Calu3 (cell line): ENCODE measurements at regions of chr14 and their contacts with region 1.

Region 1: GRCh38 chr14:66403183-66403582 is 83.0 kb upstream of the CCDC196 start:
- DNase-seq: no peak
- H3K4me3 Mint-ChIP-seq: no peak overlapping the region
- H3K27ac Mint-ChIP-seq: no peak overlapping the region
- H3K4me1 Mint-ChIP-seq: peaks cover 9% of the 10 kb centered on the region
- H3K27me3 Mint-ChIP-seq: no peaks in the 10 kb centered on the region
- CTCF ChIP-seq: peak; percentile 45

Region 2: GRCh38 chr14:66117585-66117984 is 285.6 kb before region 1 on chr14:
- CTCF ChIA-PET with region 1: no interaction called
- intact Hi-C with region 1: no loop called
- DNase-seq: peak; percentile 12
- H3K4me3 Mint-ChIP-seq: no peak overlapping the region
- H3K27ac Mint-ChIP-seq: peak overlapping the region; percentile 5
- H3K4me1 Mint-ChIP-seq: peaks cover 14% of the 10 kb centered on the region
- H3K27me3 Mint-ChIP-seq: peaks cover 4% of the 10 kb centered on the region
- CTCF ChIP-seq: no peak

Region 3: DNA sequence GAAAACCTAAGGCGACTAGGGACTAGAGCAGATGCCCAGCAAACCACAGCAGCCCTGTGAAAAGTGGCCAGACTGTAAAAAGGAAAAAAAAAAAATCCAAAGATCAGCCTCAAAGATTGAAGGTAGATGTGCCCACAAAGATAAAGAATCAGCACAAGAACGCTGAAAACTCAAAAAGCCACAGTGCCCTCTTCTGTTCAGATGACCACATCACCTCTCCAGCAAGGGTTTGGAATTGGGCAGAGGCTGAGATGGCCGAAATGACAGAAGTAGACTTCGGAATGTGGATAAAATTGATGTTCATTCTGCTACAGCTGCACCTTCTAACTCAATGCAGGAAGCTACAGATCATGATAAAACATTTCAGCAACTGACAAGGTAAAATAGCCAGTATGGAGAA is 259.2 kb after region 1 on chr14:
- CTCF ChIA-PET with region 1: no interaction called
- intact Hi-C with region 1: loop called (anchors 5 kb)
- DNase-seq: peak; percentile 39
- H3K4me3 Mint-ChIP-seq: no peak overlapping the region
- H3K27ac Mint-ChIP-seq: peak overlapping the region; percentile 1
- H3K4me1 Mint-ChIP-seq: peaks cover 8% of the 10 kb centered on the region
- H3K27me3 Mint-ChIP-seq: no peaks in the 10 kb centered on the region
- CTCF ChIP-seq: peak; percentile 45

Region 4: DNA sequence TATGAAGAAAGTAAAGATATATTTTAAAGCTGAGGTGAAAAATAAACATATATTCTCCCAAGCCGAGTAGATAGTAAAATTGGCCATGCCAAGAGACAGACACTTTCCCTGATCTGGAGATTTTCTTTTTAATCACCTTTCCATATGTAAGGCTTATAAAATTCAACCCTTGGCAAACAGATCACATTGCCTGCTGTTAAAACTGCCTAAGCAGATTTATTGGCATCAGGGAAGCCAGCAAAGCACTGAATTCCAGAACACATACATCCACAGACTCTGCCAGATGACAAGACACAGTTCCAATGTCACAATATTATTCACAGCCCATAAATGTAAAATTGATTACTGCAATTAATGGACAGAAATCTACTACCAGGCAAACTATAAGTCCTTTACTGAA is 707.8 kb after region 1 on chr14:
- CTCF ChIA-PET with region 1: no interaction called
- intact Hi-C with region 1: loop called (anchors 5 kb)
- DNase-seq: no peak
- H3K4me3 Mint-ChIP-seq: no peak overlapping the region
- H3K27ac Mint-ChIP-seq: no peak overlapping the region
- H3K4me1 Mint-ChIP-seq: no peaks in the 10 kb centered on the region
- H3K27me3 Mint-ChIP-seq: no peaks in the 10 kb centered on the region
- CTCF ChIP-seq: no peak